HEK293T (cell line): ENCODE measurements at regions of chr4 and their contacts with region 1.

Region 1: DNA sequence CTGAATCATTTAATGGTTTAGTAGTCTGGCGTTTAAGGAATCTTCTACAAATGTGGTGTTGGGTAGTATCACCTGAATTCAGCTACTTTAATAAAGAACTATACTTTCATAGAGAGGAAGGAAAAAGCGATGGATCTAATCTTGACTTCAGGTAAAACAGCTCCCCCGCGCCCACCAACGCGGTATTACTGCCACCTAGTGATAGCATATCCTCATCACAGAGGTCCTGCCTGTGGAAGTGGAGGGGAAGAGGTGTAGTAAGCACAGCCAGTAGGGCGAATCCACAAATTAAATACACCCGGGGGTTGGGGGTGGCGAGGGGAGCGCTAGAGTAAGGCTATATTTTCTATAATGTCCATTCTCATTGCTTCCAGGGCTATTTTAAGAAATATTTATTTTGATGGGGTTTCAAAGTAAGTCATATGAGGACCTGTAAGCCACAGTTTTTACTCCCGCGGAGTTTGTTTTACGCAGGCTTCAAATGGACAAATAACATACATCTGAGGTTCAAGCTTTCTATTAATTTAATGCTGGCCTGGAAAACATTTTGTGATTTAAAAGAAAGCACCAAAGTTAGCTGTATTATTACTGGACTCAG is 8.3 kb upstream of the DAPP1 start:
- DNase-seq: peak; percentile 73

Region 2: DNA sequence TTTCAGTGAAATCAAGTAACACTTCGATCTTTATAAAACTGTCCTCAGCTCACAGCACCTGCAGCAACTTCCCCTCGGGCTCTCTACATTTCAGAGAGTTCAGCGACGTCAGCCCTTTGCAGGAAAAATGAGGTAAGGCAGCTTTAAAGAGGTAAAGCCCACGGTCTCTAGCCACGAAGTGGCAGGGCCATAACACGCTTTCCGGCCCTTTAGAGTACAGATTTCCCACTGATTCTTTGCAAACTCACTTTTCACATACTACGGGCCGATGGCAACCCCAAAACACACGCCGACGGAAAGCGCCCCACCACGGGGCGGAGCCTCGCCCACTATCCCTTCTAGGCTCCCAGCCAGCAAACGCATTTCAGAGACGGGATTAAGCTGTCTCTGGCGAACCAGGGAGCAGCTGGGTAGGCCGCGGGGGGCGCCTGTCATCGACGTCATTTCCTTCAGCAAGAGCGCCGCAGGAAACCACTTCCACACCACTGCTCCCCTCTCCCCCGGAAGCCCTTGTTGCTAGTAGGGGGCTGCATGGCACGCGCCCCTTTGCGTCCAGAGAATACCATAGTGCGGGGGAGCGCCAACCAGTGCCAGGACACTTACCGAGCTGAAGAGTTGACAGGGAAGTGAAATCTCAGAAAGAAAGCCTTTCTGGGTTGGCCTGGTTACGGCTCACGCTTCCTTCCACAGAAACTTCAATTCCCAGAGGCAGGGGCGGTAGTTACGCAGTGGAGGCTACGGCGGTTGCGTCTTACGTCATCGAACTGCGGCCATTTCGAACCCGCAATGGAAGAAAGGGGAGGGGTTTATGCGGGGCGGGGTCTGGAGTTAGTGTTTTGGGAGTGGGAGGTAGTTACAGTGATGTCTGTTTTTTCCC is 244.8 kb before region 1 on chr4 and contains the start of gene TRMT10A:
- CTCF ChIA-PET with region 1: interaction called, 4 read pairs
- POLR2A ChIA-PET with region 1: interaction called, 14 read pairs
- DNase-seq: peak; percentile 87

Region 3: GRCh38 chr4:99827454-99827853 is 19.1 kb after region 1 on chr4:
- CTCF ChIA-PET with region 1: no interaction called
- POLR2A ChIA-PET with region 1: no interaction called
- DNase-seq: no peak